H1 (cell line): ENCODE measurements at regions of chr16 and their contacts with region 1.

Region 1: DNA sequence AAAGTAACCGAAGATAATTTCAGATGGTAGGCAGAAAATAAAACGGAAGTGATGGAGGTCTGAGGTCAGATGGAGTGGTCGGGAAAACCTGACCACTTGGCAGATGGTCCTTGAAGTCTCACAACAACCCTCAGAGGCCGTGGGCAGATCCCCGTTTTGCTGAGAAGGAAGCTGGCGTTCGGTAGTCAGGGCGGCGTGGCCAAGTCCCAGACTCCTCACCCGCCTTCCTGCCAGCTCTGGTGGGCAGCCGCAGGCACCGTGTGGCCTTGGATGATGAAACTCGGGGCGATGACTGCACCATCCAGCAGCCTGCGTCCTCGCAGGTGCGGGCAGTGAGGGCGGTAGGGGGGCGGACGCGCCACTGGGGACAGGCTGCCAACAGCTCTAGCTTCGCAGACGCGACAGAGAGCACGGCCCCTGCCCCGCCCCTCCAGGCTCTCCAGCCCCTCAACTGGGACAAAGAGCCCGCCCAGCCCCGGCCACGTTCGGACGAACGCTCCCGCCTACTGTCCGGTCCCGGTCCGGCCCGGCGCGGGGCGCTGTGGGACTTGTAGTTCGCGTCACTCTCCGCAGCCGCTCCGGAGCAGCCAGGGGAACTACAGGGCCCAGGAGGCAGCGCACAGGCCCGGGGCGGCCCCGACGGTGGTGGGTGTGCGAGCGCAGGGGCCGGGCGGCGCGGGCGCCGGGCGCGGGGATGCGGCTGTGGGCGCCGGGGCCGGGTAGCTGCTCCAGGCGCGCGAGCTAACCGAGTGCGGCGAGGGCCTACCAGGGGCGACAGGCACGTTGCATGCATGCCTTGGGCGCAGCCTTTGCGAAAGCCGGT is at the start of gene GPT2:
- DNase-seq: peak; percentile 88 to 97
- H3K4me3 ChIP-seq: peak within 1 kb of the TSS; percentile 85 to 95 (median 86)
- H3K27ac ChIP-seq: peak within 1 kb of the TSS; percentile 79
- H3K4me1 ChIP-seq: peaks cover 8 to 31% (median 18%) of the 10 kb centered on the region in 4 experiments
- H3K27me3 ChIP-seq: no peaks in the 10 kb centered on the region
- CTCF ChIP-seq: no peak
- EP300 ChIP-seq: no peak
- POLR2A ChIP-seq: peak; percentile 52 to 89
- RAD21 ChIP-seq: no peak
- total RNA-seq, gene GPT2: 86.3 and 94.1 TPM in 2 replicates

Region 2: DNA sequence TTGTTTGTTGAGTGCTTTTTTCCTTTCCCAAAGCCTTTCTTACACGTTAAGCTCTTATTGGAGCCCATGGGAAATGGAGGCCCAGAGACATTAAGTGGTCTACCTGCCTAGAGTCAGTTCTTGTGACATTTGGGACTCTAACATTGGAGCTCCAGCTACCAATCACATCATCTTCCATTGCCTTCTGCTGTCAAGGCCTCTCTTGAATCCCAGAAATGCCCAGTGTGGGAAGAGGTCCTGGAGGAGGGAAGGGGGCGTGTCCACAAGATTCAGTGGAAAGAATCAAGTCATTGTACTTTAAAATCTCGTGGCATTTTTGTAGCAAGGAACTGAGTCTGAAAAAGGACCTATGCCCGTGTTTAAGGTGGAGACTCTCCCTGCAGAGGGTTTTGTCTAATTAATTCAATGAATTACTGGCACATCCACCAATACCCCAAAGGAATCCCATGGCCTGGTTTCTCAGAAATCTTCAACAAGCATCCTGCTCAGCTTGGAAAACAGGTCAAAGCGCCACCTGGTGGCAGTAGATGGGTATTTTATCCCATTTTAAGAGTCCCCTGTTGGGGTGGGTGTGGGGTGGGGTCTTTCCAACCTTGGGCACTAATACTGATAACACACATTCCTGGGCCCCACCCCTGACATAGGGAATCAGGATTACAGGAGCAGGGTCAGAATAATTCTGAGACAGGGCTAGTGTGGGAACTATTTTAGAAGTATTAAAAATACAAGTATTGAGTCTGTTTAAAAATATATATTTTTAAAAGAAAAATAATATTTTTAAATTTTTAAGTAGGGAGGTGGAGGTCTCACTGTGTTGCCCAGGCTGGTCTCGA is 24.9 kb after region 1 on chr16:
- CTCF ChIA-PET with region 1: interaction called, 19 read pairs
- POLR2A ChIA-PET with region 1: interaction called, 580 read pairs
- DNase-seq: peak; percentile 27 to 81
- H3K4me3 ChIP-seq: no peak overlapping the region
- H3K27ac ChIP-seq: no peak overlapping the region; the same call in 1 of the 2 replicates
- H3K4me1 ChIP-seq: no peaks in the 10 kb centered on the region
- H3K27me3 ChIP-seq: no peaks in the 10 kb centered on the region
- CTCF ChIP-seq: peak; percentile 26 to 82 (median 66)
- EP300 ChIP-seq: no peak
- POLR2A ChIP-seq: no peak
- RAD21 ChIP-seq: peak; percentile 60 to 75